Activated T-helper 2 cell treated with anti-CD3 and anti-CD28 coated beads, Interferon-gamma antibody, Interleukin-2, Interleukin-4, amounts not matched to agents 10 μg/mL and 5 μg/mL and 100 μg/mL, durations not matched to agents 14 hours and 24 hours and 36 hours (primary cell): ENCODE measurements at regions of chr7 and their contacts with region 1.

Region 1: DNA sequence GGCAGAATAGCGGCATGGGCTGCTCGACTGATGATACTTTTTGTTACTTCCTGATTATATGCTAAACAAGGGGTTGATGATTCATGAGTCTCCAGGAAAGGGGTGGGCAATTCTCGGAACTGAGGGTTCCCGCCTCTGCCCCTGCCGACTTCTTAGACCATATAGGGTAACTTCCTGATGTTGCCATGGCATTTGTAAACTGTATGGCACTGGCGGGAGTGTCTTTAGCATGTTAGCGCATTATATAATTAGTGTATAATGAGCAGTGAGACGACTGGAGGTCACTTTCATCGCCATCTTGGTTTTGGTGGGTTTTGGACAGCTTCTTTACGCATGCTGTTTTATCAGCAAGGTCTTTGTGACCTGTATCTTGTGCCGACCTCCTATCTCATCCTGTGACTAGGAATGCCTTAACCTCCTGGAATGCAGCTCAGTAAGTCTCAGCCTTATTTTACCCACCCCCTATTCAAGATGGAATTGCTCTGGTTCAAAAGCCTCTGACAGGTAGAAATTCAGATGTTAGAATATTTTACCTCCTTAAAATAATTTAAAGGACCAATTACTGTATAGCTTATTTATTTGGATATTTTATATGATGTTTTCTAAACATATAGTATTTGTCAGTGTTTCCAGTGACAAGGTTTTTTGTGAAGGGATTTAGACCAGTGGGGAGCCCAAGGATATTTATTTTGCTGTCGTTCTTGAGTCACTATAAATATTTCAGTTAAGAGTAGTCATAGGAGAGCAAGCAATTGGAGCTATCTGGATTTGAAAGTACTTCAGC is 90.1 kb upstream of the PIK3CG start:
- DNase-seq: no peak
- H3K4me3 Mint-ChIP-seq: no peak overlapping the region
- H3K27ac Mint-ChIP-seq: peak overlapping the region; percentile 14
- H3K4me1 Mint-ChIP-seq: peaks cover 36% of the 10 kb centered on the region
- H3K27me3 Mint-ChIP-seq: no peaks in the 10 kb centered on the region

Region 2: GRCh38 chr7:106520962-106521940 is 253.7 kb before region 1 on chr7:
- intact Hi-C with region 1: no loop called
- DNase-seq: no peak
- H3K4me3 Mint-ChIP-seq: no peak overlapping the region
- H3K27ac Mint-ChIP-seq: no peak overlapping the region
- H3K4me1 Mint-ChIP-seq: peaks cover 18% of the 10 kb centered on the region
- H3K27me3 Mint-ChIP-seq: peaks cover 25% of the 10 kb centered on the region

Region 3: DNA sequence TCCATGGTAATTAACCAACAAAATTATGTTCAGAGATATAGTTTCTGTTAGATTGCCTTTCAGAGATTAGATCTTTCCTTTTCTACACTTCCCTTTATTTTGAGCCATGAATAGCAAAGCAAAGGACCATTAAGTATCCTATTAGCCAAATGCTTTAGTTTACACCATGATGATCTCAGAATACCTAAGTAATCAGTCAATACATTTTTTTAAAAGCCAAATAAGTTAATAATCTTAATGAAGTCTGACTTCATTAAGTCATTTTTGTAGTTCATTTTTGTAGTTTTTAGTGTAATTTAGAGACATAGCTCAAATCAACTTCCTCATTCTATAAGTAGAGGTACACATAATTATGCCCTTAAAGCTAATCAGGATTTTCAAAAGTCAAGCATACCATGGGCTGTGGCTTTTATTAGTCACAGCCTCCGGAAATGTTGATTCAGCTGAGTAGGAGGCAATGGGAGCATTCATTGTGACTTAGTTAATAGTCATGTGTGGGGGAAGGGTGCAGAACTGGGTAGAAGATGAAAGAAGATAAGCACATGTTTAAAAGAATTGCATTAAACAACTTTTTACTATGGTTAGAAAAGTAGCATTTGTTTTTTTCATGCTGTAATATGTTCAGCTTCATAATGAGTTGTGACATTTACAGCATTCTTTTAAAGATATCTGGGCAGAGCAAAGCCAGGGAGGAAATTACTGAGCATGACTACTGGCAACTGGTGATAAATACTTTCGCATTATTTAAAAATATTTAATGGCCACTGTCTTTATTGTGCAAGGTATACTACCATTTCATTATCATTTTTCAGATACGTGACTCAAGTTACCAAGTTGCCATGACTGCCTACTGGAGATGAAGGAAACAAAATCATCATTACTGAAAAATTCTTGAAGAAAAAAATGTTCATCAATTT is 56.7 kb before region 1 on chr7:
- intact Hi-C with region 1: loop called (anchors 1 kb)
- DNase-seq: peak; percentile 56
- H3K4me3 Mint-ChIP-seq: no peak overlapping the region
- H3K27ac Mint-ChIP-seq: no peak overlapping the region
- H3K4me1 Mint-ChIP-seq: peaks cover 30% of the 10 kb centered on the region
- H3K27me3 Mint-ChIP-seq: no peaks in the 10 kb centered on the region

Region 4: DNA sequence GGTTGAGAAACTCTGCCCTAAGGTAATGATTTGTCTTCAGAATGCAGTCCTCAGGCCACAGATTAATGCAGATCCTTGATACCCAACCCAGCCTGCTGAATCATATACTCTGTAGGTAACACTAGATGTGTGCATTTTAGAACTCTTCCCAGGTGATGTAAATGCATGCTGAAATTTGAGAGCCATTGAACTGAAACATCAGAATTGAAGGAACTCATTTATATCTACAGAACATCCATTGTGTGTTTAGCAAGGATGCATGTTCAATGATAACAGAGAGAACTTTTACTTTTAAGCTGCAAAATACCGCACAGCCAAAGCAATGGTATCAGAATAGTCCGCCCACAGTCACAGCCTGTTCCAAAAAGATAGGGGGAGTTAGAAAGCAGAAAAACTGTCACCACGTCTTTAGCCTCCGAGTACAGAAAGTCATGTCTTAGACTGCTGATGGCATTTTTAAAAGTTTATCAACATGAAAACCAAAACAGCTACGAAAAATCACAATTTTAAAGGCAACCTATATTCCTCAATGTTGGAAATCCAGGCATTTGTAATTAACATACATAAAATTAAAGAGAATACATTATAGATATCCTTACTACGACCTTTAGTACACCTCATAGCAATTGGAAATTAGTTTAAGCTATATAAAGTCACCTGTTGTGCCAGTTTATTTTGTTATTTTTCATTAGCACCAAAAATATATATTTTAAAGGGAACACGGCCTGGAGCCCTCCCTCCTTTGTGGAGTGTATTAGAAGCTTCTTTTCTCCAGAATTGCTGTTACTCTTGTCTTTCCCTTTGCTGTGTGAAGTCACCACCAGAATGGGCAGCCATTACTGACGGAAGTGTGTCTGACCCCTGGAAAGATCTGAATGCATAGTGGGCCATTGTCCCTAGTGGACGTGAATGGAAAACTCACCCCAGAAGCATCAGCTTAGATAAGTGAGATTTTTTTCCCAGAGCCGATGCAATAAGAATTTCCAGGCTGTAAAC is 203.8 kb after region 1 on chr7:
- intact Hi-C with region 1: no loop called
- DNase-seq: no peak
- H3K4me3 Mint-ChIP-seq: no peak overlapping the region
- H3K27ac Mint-ChIP-seq: no peak overlapping the region
- H3K4me1 Mint-ChIP-seq: no peaks in the 10 kb centered on the region
- H3K27me3 Mint-ChIP-seq: peaks cover 2% of the 10 kb centered on the region